Activated CD4-positive, alpha-beta T cell treated with anti-CD3 and anti-CD28 coated beads, Interleukin-2, amount 10 ng/mL, durations not matched to agents 24 days and 14 days (primary cell): ENCODE measurements at regions of chr14 and their contacts with region 1.

Region 1: DNA sequence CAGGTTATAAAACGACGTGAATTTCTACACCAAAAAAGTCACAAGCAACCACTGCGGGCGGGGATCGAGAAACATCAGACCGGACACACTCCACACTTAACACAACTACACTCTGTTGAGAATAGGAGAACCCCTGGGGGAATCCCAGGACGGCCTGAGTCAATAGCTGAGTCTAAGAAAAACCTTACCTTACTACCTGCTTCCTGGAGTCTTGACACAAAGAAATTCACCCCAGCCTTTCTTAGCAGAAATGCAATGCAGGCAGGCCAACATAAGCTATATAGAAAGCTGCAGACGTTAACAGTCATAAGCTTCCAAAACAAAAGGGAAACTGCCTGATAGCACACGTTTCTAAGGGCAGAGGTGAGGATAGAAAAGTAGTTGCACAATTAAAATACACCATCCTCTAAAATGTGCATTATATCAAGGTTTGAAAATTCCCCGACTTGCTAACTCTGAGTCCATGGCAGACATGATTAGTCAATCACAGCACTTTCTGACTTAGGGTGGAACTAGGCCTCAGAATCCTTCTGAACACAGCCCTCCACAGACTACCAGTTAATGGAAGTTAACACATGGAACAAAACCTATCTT is 68.0 kb downstream of the CCDC88C start:
- DNase-seq: peak; percentile 91
- H3K4me3 Mint-ChIP-seq: peak overlapping the region; percentile 80
- H3K27ac Mint-ChIP-seq: peak overlapping the region; percentile 94
- H3K4me1 Mint-ChIP-seq: peaks cover 74% of the 10 kb centered on the region
- H3K27me3 Mint-ChIP-seq: no peaks in the 10 kb centered on the region

Region 2: GRCh38 chr14:89641495-89642175 is 1707.9 kb before region 1 on chr14:
- intact Hi-C with region 1: no loop called
- DNase-seq: peak; percentile 86
- H3K4me3 Mint-ChIP-seq: peak overlapping the region; percentile 81
- H3K27ac Mint-ChIP-seq: peak overlapping the region; percentile 97
- H3K4me1 Mint-ChIP-seq: peaks cover 58% of the 10 kb centered on the region
- H3K27me3 Mint-ChIP-seq: no peaks in the 10 kb centered on the region

Region 3: GRCh38 chr14:91303091-91303923 is 46.3 kb before region 1 on chr14:
- intact Hi-C with region 1: loop called (anchors 1 kb)
- DNase-seq: peak; percentile 86
- H3K4me3 Mint-ChIP-seq: peak overlapping the region; percentile 54
- H3K27ac Mint-ChIP-seq: peak overlapping the region; percentile 92
- H3K4me1 Mint-ChIP-seq: peaks cover 52% of the 10 kb centered on the region
- H3K27me3 Mint-ChIP-seq: no peaks in the 10 kb centered on the region

Region 4: DNA sequence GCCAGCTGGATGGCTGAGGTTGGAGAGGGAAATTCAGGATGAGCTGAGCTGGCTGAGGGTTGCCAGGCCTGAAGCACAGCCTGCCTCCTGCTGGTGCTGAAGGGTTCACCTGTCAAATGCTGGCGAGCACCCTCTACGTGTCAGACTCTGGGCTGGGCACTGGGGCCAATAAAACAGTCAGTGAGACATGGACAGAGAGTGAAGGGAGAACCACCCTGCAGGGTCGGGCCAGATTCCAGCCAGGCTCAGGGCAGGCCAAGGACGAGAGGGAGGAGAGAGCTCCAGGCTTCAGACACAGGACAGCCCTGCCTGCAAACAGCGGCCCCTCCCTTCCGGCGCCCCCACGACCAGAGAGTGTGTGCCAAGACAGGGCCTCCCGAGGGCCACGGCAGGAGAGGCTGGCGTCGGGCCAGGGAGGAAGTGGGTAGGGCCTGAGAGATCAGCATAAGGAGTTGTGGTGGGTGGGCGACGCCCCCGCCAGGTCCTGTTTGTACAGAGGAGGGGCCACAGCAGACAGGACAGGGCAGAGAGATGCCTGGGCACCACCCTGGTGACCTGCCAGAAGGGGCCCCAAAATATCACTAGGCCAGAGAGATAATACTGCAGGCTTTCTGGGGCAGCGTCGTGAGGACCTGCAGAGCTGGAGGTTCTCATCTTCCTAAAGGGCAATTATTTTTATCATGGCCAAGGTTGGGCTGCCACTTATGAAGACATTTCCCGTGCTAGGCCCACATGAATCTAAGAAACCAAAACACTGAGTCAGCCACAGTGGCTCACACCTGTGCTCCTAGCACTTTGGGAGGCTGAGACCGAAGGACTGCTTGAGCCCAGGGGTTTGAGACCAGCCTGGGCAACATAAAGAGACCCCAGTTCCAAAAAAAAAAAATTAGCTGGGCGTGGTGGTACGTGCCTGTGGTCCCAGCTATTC is 31.9 kb before region 1 on chr14:
- intact Hi-C with region 1: loop called (anchors 1 kb)
- DNase-seq: peak; percentile 90
- H3K4me3 Mint-ChIP-seq: peak overlapping the region; percentile 82
- H3K27ac Mint-ChIP-seq: peak overlapping the region; percentile 97
- H3K4me1 Mint-ChIP-seq: peaks cover 54% of the 10 kb centered on the region
- H3K27me3 Mint-ChIP-seq: no peaks in the 10 kb centered on the region

Region 5: GRCh38 chr14:91323671-91324605 is 25.6 kb before region 1 on chr14:
- intact Hi-C with region 1: loop called (anchors 1 kb)
- DNase-seq: peak; percentile 97
- H3K4me3 Mint-ChIP-seq: peak overlapping the region; percentile 82
- H3K27ac Mint-ChIP-seq: peak overlapping the region; percentile 97
- H3K4me1 Mint-ChIP-seq: peaks cover 45% of the 10 kb centered on the region
- H3K27me3 Mint-ChIP-seq: no peaks in the 10 kb centered on the region

Region 6: DNA sequence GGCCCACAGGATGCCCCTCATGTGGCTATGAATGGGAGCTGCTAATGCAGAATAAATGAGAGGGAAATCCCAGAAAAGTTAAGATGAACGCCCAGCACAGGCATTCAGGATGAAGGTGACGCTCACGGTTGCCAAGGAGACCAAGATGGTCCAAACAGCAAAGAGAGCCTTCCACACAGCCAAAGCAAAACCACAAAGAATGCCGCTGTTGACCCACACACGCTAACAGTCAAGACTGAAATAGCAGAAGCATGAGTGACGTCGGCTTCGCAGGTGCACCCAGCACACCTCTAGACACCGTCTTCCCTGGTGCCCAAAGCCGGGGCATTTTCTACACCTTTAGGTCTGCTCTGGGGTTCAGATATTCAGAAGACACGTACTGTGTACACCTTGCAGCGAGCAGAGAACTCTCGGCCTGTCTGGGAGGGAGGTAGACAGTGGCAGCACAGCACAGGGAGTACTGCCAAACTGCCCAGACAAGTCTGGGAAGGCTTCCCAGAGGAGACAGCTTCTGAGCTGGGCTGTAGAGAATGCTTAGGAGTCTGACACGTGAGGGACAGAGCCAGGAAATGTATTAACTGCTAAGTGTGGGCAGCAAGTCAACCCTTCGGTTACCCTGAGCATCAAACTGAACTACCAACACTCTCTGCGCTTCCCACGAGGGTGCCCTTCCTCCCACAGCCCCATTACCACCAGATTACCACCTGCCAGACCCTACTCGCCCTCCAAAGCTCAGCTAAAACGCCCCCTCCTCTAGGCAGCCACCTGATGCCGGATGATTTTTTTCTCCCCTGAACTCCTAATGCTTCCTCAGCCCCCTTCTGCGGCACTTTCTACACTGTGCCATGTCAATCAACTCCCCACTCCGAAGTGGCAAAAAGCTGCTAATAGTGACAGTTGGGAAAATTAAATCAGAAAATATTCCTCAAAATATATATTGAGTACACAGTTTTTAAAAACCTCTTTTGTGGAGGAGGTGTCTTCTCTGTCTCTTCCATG is 17.9 kb after region 1 on chr14:
- intact Hi-C with region 1: loop called (anchors 1 kb)
- DNase-seq: peak; percentile 87
- H3K4me3 Mint-ChIP-seq: peak overlapping the region; percentile 71
- H3K27ac Mint-ChIP-seq: peak overlapping the region; percentile 79
- H3K4me1 Mint-ChIP-seq: peaks cover 68% of the 10 kb centered on the region
- H3K27me3 Mint-ChIP-seq: no peaks in the 10 kb centered on the region

Region 7: DNA sequence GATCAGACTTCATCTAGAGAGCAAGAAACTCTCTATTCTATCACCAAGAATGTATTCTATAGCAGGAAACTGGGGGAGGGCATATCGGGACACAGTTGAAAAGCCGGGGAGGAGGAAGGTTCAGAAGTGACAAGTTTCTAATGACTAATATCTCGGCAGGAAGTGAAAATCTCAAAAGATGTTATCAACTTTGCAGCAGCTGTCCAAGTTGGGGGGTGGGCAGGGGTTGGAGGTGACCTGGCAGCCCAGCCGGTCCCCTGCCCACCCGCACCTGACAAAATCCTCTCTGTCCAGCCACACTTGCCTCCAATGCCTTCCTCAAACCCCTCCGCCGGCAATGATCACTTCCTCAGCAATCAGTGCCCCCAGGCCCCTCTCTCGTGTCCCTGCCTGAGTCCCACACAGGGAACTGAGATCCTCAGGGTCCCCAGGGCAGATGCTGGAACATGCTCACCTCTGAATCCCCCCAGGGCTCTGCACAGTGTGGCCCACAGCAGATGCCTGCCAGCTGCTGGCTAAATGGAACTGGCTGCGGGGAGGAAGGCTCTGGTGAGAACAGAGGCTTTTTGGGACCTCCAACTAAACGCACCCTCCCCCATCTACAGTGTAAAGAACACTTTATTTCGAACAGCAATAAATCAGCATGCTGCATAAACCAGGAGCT is 24.1 kb after region 1 on chr14:
- intact Hi-C with region 1: loop called (anchors 1 kb)
- DNase-seq: peak; percentile 84
- H3K4me3 Mint-ChIP-seq: peak overlapping the region; percentile 80
- H3K27ac Mint-ChIP-seq: peak overlapping the region; percentile 90
- H3K4me1 Mint-ChIP-seq: peaks cover 94% of the 10 kb centered on the region
- H3K27me3 Mint-ChIP-seq: no peaks in the 10 kb centered on the region

Region 8: DNA sequence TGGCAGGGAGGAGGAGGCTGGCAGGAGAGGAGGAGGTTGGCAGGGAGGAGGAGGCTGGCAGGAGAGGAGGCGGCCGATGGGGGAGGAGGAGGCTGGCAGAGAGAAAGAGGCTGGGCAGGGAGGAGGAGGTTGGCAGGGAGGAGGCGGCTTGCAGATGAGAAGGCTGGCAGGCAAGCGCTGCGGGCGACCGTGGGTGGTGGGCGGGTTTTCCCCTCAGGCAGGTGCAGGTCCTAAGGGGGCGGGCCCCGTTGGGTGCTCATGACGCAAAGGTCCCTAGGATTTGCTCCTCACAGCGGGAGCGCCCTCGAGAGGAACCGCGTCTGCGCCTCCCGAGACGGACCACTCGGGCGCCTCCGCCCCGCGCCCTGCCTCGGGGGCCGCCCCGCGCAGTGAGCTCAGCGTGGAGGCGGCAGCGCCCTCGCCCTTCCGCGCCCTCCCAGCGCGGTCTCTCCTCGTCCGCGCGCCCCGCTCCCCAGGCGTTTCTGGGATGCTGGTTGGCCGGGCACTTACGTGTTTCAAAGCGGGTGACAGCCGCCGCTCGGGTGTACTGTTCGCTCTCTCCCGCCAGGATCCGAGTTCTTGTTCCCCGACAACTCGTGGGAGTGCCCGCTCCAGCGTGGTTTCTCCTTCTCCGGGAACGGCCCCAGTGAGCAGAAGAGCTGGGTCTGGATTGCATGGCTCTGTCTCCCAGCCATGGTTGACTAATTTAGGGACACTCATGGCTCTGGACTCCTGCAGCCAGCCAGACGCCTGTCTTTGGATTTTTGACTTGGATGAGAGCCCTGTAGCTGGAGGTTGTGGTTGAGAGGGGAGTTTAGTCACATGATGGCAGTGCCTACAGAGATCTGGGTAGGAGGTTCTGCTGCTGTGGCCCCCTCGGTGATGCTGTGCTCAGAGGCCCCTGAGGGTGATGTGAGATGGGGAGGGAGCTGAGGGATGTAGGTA is 224.6 kb after region 1 on chr14:
- intact Hi-C with region 1: loop called (anchors 10 kb)
- DNase-seq: peak; percentile 82
- H3K4me3 Mint-ChIP-seq: peak overlapping the region; percentile 86
- H3K27ac Mint-ChIP-seq: peak overlapping the region; percentile 70
- H3K4me1 Mint-ChIP-seq: peaks cover 15% of the 10 kb centered on the region
- H3K27me3 Mint-ChIP-seq: peaks cover 28% of the 10 kb centered on the region